Tibial artery (tissue), 4 donors: ENCODE measurements at regions of chr5 and their contacts with region 1.

Region 1: DNA sequence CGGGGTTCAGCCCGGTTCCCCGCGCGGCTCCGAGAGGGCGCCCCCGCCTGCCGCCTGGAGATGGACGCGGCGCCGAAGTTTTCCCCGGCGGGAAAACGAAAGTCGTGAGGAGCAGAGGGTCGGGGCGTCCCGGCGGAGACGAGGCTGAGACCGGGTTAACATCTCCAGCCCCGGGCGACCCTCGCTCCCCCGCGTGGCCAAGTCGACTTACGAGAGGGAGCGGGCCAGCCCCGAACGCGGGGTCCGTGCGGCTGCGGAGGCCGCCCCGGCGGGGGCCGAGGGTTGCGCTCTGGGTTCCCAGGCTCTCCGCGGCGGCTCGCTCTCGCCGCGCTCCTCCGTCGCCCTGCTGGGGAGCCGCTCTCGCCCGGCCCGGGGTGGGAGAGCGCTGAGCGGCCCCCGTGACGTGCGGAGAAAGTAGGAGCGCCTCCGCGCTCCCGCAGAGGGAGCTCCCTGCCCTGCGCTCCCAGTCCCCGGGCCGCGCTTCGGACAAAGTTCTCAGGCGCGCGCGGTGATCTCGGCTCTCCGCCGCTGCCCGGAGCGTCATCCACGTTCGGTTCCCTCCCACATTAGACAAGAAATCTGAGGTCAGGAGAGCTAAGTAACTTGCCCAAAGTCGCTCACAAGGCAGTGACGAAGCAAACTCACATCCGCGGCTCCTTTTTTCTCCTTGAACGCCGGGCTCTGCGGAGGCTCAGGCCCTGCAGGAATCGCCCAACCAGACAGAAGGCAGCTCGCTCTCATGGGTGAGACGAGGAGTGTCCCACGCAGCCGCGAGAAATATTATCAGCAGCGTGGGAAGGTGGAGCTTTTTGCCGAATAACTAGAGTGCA is 1.2 kb upstream of the GCNT4 start:
- DNase-seq: peak; percentile 34 to 81
- H3K4me3 ChIP-seq: peak overlapping the region; percentile 79 to 95
- H3K27ac ChIP-seq: peak overlapping the region; percentile 93 to 98
- H3K4me1 ChIP-seq: peaks cover 0 to 45% (median 14%) of the 10 kb centered on the region in 4 donors
- H3K27me3 ChIP-seq: no peaks in the 10 kb centered on the region
- CTCF ChIP-seq: peak in 1 of 2 experiments; percentile 3

Region 2: DNA sequence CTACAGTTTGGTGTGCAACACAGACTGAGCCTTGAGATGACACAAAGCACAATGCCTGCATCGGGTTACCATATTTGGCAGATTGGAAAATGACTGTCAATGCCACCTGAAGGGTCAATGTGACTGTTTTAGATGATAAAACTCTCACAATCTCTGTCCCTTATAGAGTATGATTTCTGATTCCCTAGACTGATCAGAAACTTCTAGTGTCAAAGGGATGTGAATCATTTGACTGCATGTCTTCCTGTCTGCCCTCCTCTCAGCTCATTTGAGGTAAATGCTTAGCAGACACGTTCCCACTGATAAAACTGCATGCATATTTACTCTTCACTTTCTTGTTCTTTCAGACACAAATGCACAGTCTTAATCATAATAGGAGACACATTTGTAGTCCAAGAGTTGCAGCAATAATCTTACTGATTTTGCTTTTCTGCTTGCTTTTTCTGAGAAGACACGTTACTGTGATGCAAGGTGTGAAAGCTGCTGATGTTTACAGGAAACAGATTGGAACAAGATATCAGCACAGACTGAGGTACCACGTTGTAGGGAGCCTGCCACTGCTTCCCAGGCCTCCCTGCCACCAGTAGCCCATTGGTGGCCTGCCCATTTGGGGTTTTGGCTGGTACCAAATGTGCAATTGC is 78.9 kb before region 1 on chr5:
- intact Hi-C with region 1: no loop called
- DNase-seq: no peak
- H3K4me3 ChIP-seq: no peak overlapping the region
- H3K27ac ChIP-seq: no peak overlapping the region
- H3K4me1 ChIP-seq: no peaks in the 10 kb centered on the region
- H3K27me3 ChIP-seq: no peaks in the 10 kb centered on the region
- CTCF ChIP-seq: no peak

Region 3: DNA sequence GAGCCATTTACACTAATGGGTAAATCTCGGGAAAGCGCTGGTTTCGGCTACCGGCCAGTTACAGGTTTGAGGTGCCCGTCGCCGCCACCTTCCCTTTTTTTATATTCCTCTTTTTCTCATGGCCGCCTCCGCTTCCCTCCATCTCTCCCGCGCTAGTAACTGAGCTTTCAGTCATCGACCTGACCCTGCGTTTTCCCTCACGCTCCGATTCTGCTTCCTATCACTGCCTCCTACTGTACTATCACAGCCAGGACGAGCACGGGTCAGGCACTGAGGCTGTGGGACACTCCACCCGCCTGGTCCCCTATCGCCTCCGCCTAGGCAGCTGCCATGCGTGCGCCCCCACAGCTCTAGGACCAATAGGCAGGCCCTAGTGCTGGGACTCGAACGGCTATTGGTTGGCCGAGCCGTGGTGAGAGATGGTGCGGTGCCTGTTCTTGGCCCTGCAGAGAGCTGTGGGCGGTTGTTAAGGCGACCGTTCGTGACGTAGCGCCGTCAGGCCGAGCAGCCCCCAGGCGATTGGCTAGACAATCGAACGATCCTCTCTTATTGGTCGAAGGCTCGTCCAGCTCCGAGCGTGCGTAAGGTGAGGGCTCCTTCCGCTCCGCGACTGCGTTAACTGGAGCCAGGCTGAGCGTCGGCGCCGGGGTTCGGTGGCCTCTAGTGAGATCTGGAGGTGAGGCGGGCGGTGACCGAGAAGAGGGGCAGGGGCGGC is 283.3 kb after region 1 on chr5 and contains the start of gene HMGCR:
- intact Hi-C with region 1: loop called (anchors 5 kb)
- DNase-seq: peak; percentile 99
- H3K4me3 ChIP-seq: peak within 1 kb of the TSS; percentile 80 to 91
- H3K27ac ChIP-seq: peak within 1 kb of the TSS; percentile 87 to 88
- H3K4me1 ChIP-seq: peaks cover 0 to 17% (median 6%) of the 10 kb centered on the region in 4 donors
- H3K27me3 ChIP-seq: no peaks in the 10 kb centered on the region
- CTCF ChIP-seq: no peak

Region 4: DNA sequence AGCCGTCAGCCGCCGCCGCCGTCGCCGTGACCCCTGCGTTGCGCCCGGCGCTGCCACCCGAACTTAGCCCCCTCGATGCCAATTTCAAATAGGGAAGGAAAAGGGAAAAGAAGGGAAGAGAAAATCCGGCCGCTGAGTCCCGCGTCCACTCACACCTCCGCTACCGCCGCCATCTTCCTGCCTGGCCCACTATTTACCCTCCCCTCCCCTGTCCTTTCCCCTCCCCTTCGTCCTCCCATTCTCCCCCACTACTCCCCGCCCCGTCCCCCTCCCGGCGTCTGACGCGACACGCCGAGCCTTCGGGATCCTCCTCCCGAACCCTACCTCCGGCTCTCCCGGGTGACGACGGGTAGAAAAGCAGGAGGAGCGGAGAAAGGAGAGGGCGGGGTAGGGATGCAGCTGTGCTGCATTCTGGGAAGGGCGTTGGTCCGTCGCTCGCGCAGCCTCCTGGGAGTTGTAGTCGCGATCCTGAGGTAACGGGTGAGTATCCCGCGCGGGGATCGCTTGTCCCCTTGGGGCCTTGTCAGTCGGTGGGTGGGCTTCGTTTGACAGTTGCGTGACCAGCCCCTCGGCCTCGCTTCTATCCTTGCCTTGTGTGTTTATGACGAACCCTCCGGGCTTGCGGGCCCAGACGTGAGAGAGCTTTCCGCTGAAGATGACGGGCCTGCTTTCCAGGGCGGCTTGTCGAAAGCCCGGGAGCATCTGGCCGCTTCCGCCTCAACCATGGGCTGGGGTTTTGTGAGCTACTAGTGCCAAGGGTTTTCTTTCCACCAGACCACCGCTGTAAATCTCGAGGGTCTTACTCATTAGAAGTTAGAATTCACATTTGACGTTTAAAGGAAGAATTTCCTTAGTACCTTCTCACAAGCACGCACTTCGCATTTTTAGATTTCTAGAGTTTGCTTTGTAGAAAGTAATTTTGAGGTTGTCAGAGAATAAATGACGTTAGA is 458.2 kb after region 1 on chr5 and contains the starts of genes CERT1 and POLK:
- intact Hi-C with region 1: loop called (anchors 5 kb)
- DNase-seq: peak; percentile 98 to 99
- H3K4me3 ChIP-seq: peak within 1 kb of the TSS; percentile 81 to 92
- H3K27ac ChIP-seq: peak within 1 kb of the TSS; percentile 93 to 97
- H3K4me1 ChIP-seq: peaks cover 0 to 46% (median 16%) of the 10 kb centered on the region in 4 donors
- H3K27me3 ChIP-seq: no peaks in the 10 kb centered on the region
- CTCF ChIP-seq: no peak